B cell (primary cell): ENCODE measurements at regions of chr11 and their contacts with region 1.

Region 1: DNA sequence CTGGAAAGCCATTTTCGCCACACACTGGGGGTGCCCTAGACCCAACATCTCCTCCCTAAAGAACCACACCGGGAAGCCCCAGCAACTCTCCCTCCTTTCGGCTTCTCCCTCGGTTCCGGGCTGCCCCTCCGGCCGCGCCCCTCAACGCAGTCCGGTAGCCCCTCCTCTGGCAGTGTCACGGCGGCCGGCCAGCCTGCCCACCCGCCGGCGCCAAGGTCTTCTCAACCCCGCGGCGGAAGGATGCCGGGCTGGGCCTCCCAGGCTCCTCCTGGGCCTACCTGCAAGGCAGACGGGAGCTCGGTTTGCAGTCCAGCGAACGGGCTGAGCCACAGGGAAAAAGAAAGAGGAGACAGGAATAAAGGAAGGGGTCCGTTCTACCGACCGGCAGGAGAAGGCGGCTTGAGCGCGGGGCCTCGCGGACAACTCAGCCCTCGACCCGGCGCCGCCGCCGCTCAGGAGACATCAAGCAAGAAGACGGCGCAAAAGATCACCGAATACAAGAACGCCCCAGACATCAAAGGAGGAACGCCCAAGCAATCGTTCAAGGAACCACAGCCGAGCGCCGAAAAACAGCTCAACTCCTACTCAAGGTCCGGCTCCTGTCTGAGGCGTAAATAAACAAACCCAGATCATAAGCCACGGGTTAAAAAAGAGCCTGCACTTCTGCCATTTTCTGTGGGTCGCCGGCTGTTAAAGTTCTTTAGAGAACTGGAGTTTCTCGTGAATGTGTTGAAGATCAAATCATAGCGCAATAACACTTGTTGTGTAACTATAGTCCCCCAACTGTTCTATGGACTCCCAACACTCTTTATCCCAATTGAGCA is at the start of gene AMBRA1:
- DNase-seq: peak; percentile 90
- ATAC-seq: peak; percentile 92
- H3K4me3 ChIP-seq: peak within 1 kb of the TSS; percentile 71 to 98 (median 80)
- H3K4me3 Mint-ChIP-seq: peak within 1 kb of the TSS; percentile 93
- H3K27ac ChIP-seq: peak within 1 kb of the TSS; percentile 58 to 78
- H3K27ac Mint-ChIP-seq: peak within 1 kb of the TSS; percentile 91
- H3K4me1 ChIP-seq: peaks cover 18 to 21% of the 10 kb centered on the region in 2 donors
- H3K4me1 Mint-ChIP-seq: peaks cover 39% of the 10 kb centered on the region
- H3K27me3 ChIP-seq: no peaks in the 10 kb centered on the region
- H3K27me3 Mint-ChIP-seq: no peaks in the 10 kb centered on the region
- CTCF ChIP-seq: no peak
- total RNA-seq, gene AMBRA1: 36.1 and 47.4 TPM in 2 replicates

Region 2: GRCh38 chr11:46529095-46529905 is 64.5 kb before region 1 on chr11:
- CTCF ChIA-PET with region 1: interaction called, 3 read pairs
- POLR2A ChIA-PET with region 1: no interaction called
- intact Hi-C with region 1: loop called (anchors 1 kb)
- DNase-seq: peak; percentile 79
- ATAC-seq: peak; percentile 100
- H3K4me3 ChIP-seq: no peak overlapping the region
- H3K4me3 Mint-ChIP-seq: no peak overlapping the region
- H3K27ac ChIP-seq: no peak overlapping the region
- H3K27ac Mint-ChIP-seq: peak overlapping the region; percentile 46
- H3K4me1 ChIP-seq: peaks cover 4 to 5% of the 10 kb centered on the region in 2 donors
- H3K4me1 Mint-ChIP-seq: peaks cover 21% of the 10 kb centered on the region
- H3K27me3 ChIP-seq: no peaks in the 10 kb centered on the region
- H3K27me3 Mint-ChIP-seq: no peaks in the 10 kb centered on the region
- CTCF ChIP-seq: peak; percentile 96

Region 3: DNA sequence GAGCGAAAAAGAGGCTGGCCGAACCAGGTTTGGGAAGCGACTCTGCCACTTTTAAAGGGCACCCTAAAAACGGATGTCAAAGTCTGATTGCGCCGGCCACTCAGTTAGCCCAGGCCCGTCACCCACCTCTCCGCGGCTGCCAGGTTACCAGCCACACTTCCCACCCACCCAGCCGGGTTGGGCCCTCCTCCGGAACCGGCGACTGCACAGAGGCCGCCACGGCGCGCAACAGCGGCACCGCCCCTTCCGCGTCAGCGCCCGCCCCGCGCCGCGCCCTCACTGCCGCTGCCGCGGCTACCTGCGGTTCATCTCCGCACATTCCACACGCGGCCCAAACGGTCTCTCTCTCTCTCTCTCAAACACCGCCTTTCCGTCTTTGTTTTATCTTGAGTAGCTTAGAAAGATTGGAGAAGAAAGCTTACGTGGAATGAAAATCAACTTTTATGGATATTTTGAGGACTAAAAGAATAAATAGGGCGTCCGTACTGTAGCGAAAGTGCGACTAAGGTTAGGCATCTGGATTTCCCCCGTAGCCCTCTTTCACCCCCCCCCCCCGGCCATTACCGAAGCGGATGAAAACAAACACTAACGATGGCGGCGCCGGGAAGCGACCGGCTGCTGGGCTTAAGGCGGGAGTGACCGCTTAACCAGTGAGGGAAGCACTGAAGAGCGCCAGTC is 23.4 kb after region 1 on chr11 and contains the starts of genes ATG13 and HARBI1:
- CTCF ChIA-PET with region 1: interaction called, 9 read pairs
- POLR2A ChIA-PET with region 1: interaction called, 10 read pairs
- intact Hi-C with region 1: loop called (anchors 1 kb)
- DNase-seq: peak; percentile 96
- ATAC-seq: peak; percentile 94
- H3K4me3 ChIP-seq: peak within 1 kb of the TSS; percentile 84 to 100 (median 100)
- H3K4me3 Mint-ChIP-seq: peak within 1 kb of the TSS; percentile 99
- H3K27ac ChIP-seq: peak within 1 kb of the TSS; percentile 99 to 100
- H3K27ac Mint-ChIP-seq: peak within 1 kb of the TSS; percentile 100
- H3K4me1 ChIP-seq: peaks cover 17 to 22% of the 10 kb centered on the region in 2 donors
- H3K4me1 Mint-ChIP-seq: peaks cover 30% of the 10 kb centered on the region
- H3K27me3 ChIP-seq: no peaks in the 10 kb centered on the region
- H3K27me3 Mint-ChIP-seq: no peaks in the 10 kb centered on the region
- CTCF ChIP-seq: no peak
- total RNA-seq, gene ATG13: 88.8 and 92.8 TPM in 2 replicates
- total RNA-seq, gene HARBI1: 6.7 and 8.0 TPM in 2 replicates

Region 4: GRCh38 chr11:46649180-46649738 is 55.5 kb after region 1 on chr11:
- CTCF ChIA-PET with region 1: no interaction called
- POLR2A ChIA-PET with region 1: no interaction called
- intact Hi-C with region 1: no loop called
- DNase-seq: no peak
- ATAC-seq: no peak
- H3K4me3 ChIP-seq: no peak overlapping the region
- H3K4me3 Mint-ChIP-seq: no peak overlapping the region
- H3K27ac ChIP-seq: no peak overlapping the region
- H3K27ac Mint-ChIP-seq: no peak overlapping the region
- H3K4me1 ChIP-seq: no peaks in the 10 kb centered on the region
- H3K4me1 Mint-ChIP-seq: no peaks in the 10 kb centered on the region
- H3K27me3 ChIP-seq: no peaks in the 10 kb centered on the region
- H3K27me3 Mint-ChIP-seq: no peaks in the 10 kb centered on the region
- CTCF ChIP-seq: no peak

Region 5: GRCh38 chr11:47020793-47021526 is 427.2 kb after region 1 on chr11:
- CTCF ChIA-PET with region 1: no interaction called
- POLR2A ChIA-PET with region 1: no interaction called
- intact Hi-C with region 1: no loop called
- DNase-seq: no peak
- ATAC-seq: no peak
- H3K4me3 ChIP-seq: no peak overlapping the region
- H3K4me3 Mint-ChIP-seq: no peak overlapping the region
- H3K27ac ChIP-seq: no peak overlapping the region
- H3K27ac Mint-ChIP-seq: no peak overlapping the region
- H3K4me1 ChIP-seq: no peaks in the 10 kb centered on the region
- H3K4me1 Mint-ChIP-seq: peaks cover 1% of the 10 kb centered on the region
- H3K27me3 ChIP-seq: no peaks in the 10 kb centered on the region
- H3K27me3 Mint-ChIP-seq: no peaks in the 10 kb centered on the region
- CTCF ChIP-seq: no peak